ENCODE measurements at regions of chr6 and their contacts with region 1.

Region 1: GRCh38 chr6:108558372-108559096 is 2.2 kb upstream of the FOXO3 start:
- DNase-seq: peak; percentile 92 to 99
- H3K4me3 ChIP-seq: peak overlapping the region; percentile 87 to 93
- H3K27ac ChIP-seq: peak overlapping the region; percentile 98
- H3K4me1 ChIP-seq: peaks cover 4 to 14% of the 10 kb centered on the region in 2 donors
- H3K27me3 ChIP-seq: no peaks in the 10 kb centered on the region
- CTCF ChIP-seq: no peak

Region 2: DNA sequence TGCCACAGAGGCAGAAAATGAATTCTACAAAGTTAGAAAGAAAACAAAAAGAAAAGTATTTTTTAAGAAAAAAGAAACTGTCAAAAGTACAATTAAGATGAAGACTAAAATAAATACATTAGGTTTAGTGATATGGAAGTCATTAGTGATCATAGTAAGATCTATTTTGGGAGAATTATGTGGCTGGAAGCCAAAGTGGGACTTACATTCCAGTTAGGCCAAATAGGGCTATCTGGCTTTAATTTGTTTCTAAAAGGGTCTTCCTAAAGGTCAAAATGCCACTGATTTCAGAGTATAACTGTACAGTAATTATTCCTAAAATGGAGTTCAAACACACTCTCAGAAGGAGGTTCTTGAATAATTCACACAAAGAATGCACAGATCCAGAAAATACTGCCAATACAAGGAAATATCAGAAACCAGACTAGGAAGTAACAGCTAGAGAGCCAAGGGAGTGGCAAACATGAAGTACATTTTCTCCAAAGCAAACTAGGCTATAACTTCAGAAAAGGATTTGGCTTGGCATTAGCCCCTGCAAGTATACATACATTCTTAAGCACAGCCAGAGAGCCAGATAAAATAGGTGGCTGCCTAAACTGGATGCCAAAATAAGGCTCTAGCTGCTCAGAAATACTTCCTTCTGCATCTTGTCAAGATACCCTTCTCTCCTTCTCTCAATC is 1144.4 kb before region 1 on chr6:
- intact Hi-C with region 1: no loop called
- DNase-seq: no peak
- H3K4me3 ChIP-seq: no peak overlapping the region
- H3K27ac ChIP-seq: no peak overlapping the region
- H3K4me1 ChIP-seq: peaks cover 0 to 7% of the 10 kb centered on the region in 2 donors
- H3K27me3 ChIP-seq: no peaks in the 10 kb centered on the region
- CTCF ChIP-seq: no peak

Region 3: GRCh38 chr6:108592371-108593337 is 34.1 kb after region 1 on chr6:
- intact Hi-C with region 1: loop called (anchors 1 kb)
- DNase-seq: no peak
- H3K4me3 ChIP-seq: peak overlapping the region; percentile 35 to 38
- H3K27ac ChIP-seq: peak overlapping the region; percentile 87 to 91
- H3K4me1 ChIP-seq: peaks cover 48 to 98% of the 10 kb centered on the region in 2 donors
- H3K27me3 ChIP-seq: no peaks in the 10 kb centered on the region
- CTCF ChIP-seq: no peak

Region 4: DNA sequence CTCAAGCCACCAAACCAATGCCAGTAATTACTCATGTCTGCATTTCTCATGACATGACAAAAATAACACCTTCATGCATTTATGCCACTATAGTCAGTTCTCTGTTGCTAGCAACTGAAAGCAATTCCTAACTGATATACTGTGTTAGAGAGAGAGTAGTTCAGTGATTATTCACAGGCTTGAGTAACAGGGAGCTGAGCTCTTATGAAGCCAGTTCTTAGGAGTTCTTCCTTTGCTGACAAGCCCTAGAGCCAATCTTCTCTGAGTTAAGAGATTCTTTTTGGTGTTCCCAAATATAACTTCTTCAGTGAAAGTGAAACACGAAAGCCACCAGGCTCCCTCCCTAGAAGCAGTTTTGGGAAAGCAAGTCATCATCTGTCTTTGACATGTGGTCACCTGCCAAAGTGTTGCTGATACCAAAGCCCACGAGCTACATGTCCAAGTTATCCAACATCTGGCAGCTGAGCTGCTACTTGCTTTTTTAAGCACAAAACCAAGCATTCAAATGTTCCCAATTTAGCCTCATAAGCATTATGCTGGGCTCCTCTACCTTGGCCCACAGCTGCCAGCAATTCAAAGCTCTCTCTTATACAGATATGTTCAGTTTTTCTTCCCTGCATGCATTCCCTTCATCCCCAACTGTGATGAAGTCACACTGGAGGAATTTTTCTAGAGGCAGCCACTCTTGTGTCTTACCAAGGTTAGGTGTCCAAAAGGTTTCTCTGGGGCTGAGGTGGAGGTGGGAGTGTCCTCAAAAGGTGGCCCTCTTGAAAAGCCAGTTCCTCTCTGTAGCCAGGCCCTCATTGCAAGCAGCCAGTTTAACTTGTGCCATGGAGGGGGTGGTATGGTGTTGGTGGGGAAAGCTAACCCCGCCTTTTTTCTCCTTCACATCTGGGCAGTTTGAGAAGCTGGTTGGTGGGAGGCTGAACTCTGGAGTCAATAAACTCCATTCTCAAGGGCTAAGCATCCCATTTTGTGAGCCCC is 197.0 kb after region 1 on chr6:
- intact Hi-C with region 1: loop called (anchors 5 kb)
- DNase-seq: peak in 1 of 2 donors; percentile 69
- H3K4me3 ChIP-seq: peak overlapping the region in 1 of 2 donors; percentile 18
- H3K27ac ChIP-seq: peak overlapping the region; percentile 64 to 75
- H3K4me1 ChIP-seq: peaks cover 0 to 9% of the 10 kb centered on the region in 2 donors
- H3K27me3 ChIP-seq: no peaks in the 10 kb centered on the region
- CTCF ChIP-seq: no peak

Region 5: GRCh38 chr6:108874470-108875160 is 316.1 kb after region 1 on chr6:
- intact Hi-C with region 1: loop called (anchors 1 kb)
- DNase-seq: peak in 1 of 2 donors; percentile 72
- H3K4me3 ChIP-seq: peak overlapping the region in 1 of 2 donors; percentile 36
- H3K27ac ChIP-seq: peak overlapping the region; percentile 80 to 90
- H3K4me1 ChIP-seq: peaks cover 8 to 44% of the 10 kb centered on the region in 2 donors
- H3K27me3 ChIP-seq: no peaks in the 10 kb centered on the region
- CTCF ChIP-seq: no peak

Region 6: DNA sequence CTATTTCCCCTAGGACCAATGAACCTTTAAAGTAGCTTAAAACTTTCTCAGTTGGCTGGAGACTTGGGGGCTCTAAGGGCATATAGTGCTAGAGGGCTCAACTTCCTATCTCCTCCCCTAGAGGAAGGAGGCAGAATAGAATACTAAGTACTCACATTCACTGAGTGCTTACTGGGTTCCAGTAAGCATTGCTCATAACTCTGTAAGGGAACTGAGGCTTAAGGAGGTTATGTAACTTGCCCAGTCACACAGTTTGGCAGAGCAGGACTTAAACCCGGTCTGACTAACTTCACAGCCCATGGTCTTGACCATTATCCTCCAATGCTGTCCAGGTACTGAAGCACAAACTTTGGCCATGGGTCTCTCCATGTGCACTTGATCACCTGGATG is 523.6 kb after region 1 on chr6:
- intact Hi-C with region 1: loop called (anchors 5 kb)
- DNase-seq: no peak
- H3K4me3 ChIP-seq: no peak overlapping the region
- H3K27ac ChIP-seq: peak overlapping the region; percentile 47 to 82
- H3K4me1 ChIP-seq: peaks cover 12 to 33% of the 10 kb centered on the region in 2 donors
- H3K27me3 ChIP-seq: no peaks in the 10 kb centered on the region
- CTCF ChIP-seq: peak in 1 of 3 experiments; percentile 19

Region 7: DNA sequence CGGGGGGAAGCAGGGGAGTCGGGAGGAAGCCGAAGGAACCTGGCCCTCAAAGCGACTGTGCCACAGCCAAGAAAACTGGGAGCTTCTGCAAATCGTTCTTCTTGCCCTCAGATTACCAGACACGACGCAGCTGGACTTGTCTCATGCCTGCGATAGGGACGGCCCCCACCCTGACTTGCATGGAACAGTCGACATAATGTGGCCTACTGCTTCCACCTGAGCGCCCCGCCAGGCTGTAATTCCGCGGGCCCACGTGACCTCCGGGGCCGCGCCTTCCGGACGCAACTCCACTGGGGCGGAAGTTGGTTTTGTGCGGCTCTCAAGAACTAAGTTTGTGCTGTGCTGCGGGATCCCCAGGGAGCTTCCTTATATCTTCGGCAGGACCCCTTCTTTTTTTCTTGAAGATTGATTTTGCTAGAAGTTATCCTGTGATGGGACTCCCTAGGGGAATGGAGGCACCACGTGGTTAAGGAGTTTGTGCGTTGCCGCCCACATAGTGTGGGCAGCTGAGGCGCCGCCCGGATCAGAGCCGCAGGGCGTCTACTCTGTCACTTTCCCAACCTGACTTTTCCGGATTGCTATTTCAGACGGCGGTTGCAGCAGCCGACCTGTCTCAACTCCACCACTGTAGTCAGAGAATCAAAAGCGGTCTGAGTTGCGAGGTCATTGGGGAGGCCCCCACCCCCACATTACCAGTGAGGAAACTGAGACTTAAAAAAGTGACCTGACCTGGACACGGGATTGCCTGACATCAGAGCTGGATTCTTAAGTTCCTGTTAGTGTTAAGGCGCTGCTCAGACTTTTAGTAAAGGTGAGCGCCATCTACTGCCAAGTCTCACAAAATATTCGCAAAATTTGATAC is 824.3 kb after region 1 on chr6:
- intact Hi-C with region 1: loop called (anchors 2 kb)
- DNase-seq: peak; percentile 81 to 96
- H3K4me3 ChIP-seq: peak overlapping the region; percentile 84 to 95
- H3K27ac ChIP-seq: peak overlapping the region; percentile 99
- H3K4me1 ChIP-seq: peaks cover 0 to 17% of the 10 kb centered on the region in 2 donors
- H3K27me3 ChIP-seq: no peaks in the 10 kb centered on the region
- CTCF ChIP-seq: peak; percentile 47 to 66 (median 57)